CD4-positive, alpha-beta T cell (primary cell): ENCODE measurements at regions of chr2 and their contacts with region 1.

Region 1: DNA sequence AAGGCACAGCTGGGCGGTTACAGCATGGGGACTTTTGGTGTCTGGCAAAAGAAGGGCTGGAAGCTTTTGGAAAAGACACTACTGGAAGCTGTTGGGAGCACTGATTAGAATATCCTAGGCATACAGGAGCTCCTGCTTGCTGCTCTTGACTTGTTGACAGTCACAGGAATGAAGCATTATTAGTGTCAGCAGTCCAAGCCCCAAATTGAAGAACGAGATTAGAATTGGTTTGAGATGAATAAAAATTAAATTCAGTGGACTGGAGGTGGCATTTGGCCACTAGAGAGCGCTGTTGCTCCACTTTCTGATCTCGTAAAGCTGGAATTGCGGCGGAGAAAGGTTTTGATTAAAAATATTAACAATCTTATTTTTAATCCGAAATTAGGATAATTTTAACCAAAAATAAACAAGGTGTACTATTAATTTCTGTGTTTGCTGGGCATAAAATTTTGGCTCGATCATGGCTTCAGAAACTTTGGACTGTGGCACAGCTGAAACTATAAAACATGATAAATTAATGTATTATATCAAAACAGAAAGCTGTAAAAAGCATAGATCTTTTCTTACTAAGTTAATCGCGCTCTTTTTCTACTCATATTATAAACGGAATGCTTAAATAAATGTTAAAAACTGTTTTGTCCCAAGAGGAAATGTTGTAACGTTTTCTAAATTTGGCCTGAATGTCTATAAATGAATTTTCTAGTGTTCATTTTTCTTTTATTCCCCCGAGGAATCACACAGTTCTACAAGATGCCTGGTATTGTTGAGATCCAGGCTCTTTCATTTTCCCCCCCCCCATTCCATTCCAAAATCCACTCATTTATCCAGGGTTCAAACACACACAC is 2.4 kb upstream of the HOXD8 start:
- DNase-seq: peak; percentile 54 to 85 (median 65)
- ATAC-seq: no peak
- H3K4me3 ChIP-seq: no peak overlapping the region
- H3K4me3 Mint-ChIP-seq: no peak overlapping the region
- H3K27ac ChIP-seq: no peak overlapping the region
- H3K27ac Mint-ChIP-seq: peak overlapping the region; percentile 38
- H3K4me1 ChIP-seq: peaks cover 43% of the 10 kb centered on the region
- H3K4me1 Mint-ChIP-seq: peaks cover 45% of the 10 kb centered on the region
- H3K27me3 ChIP-seq: peaks cover 79 to 90% of the 10 kb centered on the region in 2 experiments
- H3K27me3 Mint-ChIP-seq: peaks cover 84% of the 10 kb centered on the region
- CTCF ChIP-seq: peak; percentile 99

Region 2: GRCh38 chr2:176088048-176088936 is 38.9 kb before region 1 on chr2:
- CTCF ChIA-PET with region 1: no interaction called
- POLR2A ChIA-PET with region 1: interaction called, 3 read pairs
- intact Hi-C with region 1: loop called in 1 of 2 experiments (anchors 5 kb)
- DNase-seq: peak in 5 of 14 experiments; percentile 23 to 56 (median 34)
- ATAC-seq: no peak
- H3K4me3 ChIP-seq: no peak overlapping the region
- H3K4me3 Mint-ChIP-seq: peak overlapping the region; percentile 72
- H3K27ac ChIP-seq: no peak overlapping the region
- H3K27ac Mint-ChIP-seq: peak overlapping the region; percentile 47
- H3K4me1 ChIP-seq: peaks cover 31% of the 10 kb centered on the region
- H3K4me1 Mint-ChIP-seq: peaks cover 36% of the 10 kb centered on the region
- H3K27me3 ChIP-seq: peaks cover 90 to 93% of the 10 kb centered on the region in 2 experiments
- H3K27me3 Mint-ChIP-seq: peaks cover 93% of the 10 kb centered on the region
- CTCF ChIP-seq: peak; percentile 24

Region 3: DNA sequence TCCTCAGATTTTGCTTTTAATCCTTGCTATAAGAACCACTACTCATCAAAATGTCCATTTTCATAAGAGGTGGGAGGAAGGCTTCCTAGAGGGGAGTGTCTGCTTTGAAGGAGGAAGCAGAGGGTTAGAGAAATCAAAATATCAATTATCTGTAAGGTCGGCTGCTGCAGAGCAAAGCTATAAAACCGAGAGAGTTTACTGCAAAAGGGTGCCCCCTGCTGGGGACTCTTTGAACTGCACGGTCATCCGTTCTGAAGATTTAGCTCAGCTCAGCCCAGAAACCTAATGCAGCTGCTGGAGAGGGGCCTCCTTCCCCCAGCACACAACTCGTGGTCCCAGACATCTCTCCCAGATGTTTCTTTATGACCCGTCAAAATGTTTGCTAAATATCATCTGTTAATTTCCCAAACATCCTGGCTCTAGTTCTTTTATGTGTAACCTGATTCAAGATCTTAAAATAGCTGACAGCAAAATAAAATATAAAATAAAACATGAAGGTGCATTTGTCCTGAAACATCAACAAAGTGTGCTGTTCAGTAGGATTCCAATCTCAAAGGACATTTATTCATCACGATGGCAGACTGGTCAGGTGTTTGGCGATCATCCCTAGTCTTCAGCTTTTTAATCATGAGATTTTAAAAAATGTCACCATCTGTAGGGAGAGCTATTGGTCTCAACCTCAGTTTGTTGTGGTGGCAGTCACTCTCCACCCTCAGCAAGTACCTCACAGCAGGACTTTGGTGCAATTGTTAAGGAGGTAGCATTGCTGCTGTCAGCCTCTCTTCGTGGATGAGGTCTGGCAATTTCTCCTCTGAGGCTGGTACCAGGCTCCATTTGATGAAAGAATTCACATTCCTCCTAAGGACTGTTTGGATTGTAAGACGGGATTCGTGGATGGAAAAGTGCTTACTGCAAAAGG is 328.0 kb after region 1 on chr2:
- CTCF ChIA-PET with region 1: interaction called, 42 read pairs
- POLR2A ChIA-PET with region 1: interaction called, 8 read pairs
- intact Hi-C with region 1: loop called (anchors 1 kb)
- DNase-seq: peak; percentile 54 to 85 (median 72)
- ATAC-seq: peak; percentile 76
- H3K4me3 ChIP-seq: no peak overlapping the region
- H3K4me3 Mint-ChIP-seq: no peak overlapping the region
- H3K27ac ChIP-seq: no peak overlapping the region
- H3K27ac Mint-ChIP-seq: no peak overlapping the region
- H3K4me1 ChIP-seq: no peaks in the 10 kb centered on the region
- H3K4me1 Mint-ChIP-seq: no peaks in the 10 kb centered on the region
- H3K27me3 ChIP-seq: peaks cover 9 to 47% of the 10 kb centered on the region in 2 experiments
- H3K27me3 Mint-ChIP-seq: peaks cover 67% of the 10 kb centered on the region
- CTCF ChIP-seq: peak; percentile 84

Region 4: DNA sequence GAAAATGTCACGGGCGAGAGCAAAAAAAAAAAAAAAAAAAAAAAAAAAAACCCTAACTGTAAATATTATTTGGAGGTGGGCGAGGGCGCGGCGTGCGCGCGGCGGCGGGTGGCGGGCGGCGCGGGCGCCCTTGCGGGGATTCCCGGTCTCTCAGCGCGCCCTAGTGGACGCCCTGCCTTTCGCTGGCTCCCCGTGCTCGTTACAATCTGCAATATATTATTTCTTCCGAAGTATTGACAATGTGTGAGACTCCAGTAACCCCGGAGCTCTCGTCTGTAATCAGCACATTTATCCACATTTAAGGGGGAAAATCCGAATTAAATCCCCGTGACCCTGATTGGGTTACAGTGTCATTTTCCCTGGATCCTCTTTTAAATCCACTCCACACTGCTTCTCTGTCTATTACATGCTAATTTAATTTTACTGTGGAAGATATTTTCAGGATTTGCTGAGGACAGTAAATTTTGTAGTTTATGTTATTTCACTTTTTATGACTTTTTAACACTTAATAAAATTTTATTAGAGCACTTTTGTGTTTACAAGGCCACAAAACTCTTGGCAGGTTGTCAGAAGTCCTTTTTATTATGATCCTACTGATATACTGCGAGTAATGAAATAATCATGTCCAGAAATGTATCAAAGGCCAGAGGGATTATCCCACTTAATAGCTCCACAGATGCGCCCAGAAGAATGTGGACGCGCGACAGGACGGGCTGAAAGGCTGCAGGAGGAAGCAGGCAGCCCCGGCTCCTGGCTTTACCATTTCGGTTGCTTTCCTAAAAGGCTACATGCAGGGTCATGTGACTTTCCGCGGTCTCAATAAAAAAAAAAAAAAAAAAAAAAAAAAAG is 511.2 kb after region 1 on chr2:
- CTCF ChIA-PET with region 1: no interaction called
- POLR2A ChIA-PET with region 1: no interaction called
- intact Hi-C with region 1: loop called in 1 of 2 experiments (anchors 5 kb)
- DNase-seq: peak; percentile 19 to 71 (median 45)
- ATAC-seq: peak; percentile 80
- H3K4me3 ChIP-seq: peak overlapping the region; percentile 42
- H3K4me3 Mint-ChIP-seq: peak overlapping the region; percentile 62
- H3K27ac ChIP-seq: no peak overlapping the region
- H3K27ac Mint-ChIP-seq: no peak overlapping the region
- H3K4me1 ChIP-seq: peaks cover 10% of the 10 kb centered on the region
- H3K4me1 Mint-ChIP-seq: peaks cover 8% of the 10 kb centered on the region
- H3K27me3 ChIP-seq: peaks cover 26 to 79% of the 10 kb centered on the region in 2 experiments
- H3K27me3 Mint-ChIP-seq: peaks cover 81% of the 10 kb centered on the region
- CTCF ChIP-seq: peak; percentile 41

Region 5: GRCh38 chr2:176814306-176815052 is 687.3 kb after region 1 on chr2:
- CTCF ChIA-PET with region 1: no interaction called
- POLR2A ChIA-PET with region 1: no interaction called
- intact Hi-C with region 1: loop called (anchors 5 kb)
- DNase-seq: peak in 4 of 14 experiments; percentile 6 to 52 (median 48)
- ATAC-seq: peak; percentile 67
- H3K4me3 ChIP-seq: no peak overlapping the region
- H3K4me3 Mint-ChIP-seq: no peak overlapping the region
- H3K27ac ChIP-seq: no peak overlapping the region
- H3K27ac Mint-ChIP-seq: no peak overlapping the region
- H3K4me1 ChIP-seq: peaks cover 3% of the 10 kb centered on the region
- H3K4me1 Mint-ChIP-seq: peaks cover 19% of the 10 kb centered on the region
- H3K27me3 ChIP-seq: no peaks in the 10 kb centered on the region
- H3K27me3 Mint-ChIP-seq: no peaks in the 10 kb centered on the region
- CTCF ChIP-seq: peak; percentile 69